ENCODE measurements at regions of chr20 and their contacts with region 1.

Region 1: DNA sequence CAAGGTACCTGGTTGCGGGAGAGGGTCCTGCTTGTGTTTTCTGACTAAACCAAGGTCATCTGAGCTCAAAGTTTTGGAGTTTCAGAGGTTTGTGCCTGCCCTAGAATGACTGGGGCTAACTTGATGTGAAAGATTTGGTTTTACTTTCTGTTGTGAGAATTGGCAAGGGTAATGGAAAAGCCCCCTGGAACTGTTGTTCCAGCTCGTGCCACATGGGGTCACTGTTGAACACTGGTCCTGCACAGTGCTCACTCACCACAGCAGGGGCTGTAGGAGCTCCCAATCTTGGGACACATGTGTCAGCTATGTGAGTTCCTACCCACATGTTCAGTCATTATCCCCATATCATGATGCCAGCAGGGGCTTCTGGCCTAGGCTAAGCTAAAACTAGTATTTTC is 6.5 kb downstream of the TGM6 start:
- DNase-seq: peak; percentile 82
- ATAC-seq: peak; percentile 90
- H3K4me3 Mint-ChIP-seq: no peak overlapping the region
- H3K27ac Mint-ChIP-seq: no peak overlapping the region
- H3K4me1 Mint-ChIP-seq: peaks cover 3% of the 10 kb centered on the region
- H3K27me3 Mint-ChIP-seq: peaks cover 10% of the 10 kb centered on the region

Region 2: DNA sequence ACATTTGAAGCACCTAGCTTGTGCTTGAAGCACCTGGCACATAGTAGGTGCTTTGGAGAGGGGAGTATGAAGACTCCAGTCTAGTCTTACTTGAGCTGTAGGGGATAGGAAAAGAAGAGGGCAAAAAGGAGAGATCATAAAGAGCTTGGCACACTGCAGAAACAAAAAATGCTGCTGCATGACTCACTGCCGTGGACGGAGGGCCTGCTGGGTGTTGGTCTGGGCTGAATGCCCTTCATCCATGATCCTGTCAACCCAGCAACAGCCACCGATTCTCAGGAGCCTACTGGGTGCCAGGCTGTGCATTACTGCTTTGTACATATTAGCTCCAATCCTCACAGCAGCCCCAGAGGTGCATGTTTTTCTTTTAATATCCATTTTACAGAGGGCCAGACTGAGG is 399.4 kb before region 1 on chr20:
- CTCF ChIA-PET with region 1: no interaction called
- POLR2A ChIA-PET with region 1: no interaction called
- intact Hi-C with region 1: no loop called
- DNase-seq: no peak
- ATAC-seq: no peak
- H3K4me3 Mint-ChIP-seq: no peak overlapping the region
- H3K27ac Mint-ChIP-seq: no peak overlapping the region
- H3K4me1 Mint-ChIP-seq: no peaks in the 10 kb centered on the region
- H3K27me3 Mint-ChIP-seq: peaks cover 27% of the 10 kb centered on the region

Region 3: DNA sequence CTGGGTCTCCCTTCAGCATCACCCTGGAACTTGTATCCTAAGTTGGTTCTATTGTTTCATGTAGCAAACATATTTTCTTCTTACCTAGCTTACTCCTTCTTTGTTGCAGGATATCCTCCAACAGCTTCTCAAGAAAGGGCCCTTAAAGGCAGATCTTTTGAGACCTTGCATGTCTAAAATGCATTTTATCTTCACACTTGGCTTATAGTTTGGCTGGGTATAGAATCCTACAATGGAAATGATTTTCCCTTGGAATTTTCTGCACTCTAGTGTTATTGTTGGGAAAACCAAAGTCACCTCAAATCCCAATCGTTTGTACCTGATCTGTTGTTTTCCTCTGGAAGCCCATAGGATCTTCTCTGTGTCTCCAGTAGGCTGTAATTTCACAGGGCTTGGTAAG is 18.6 kb before region 1 on chr20:
- CTCF ChIA-PET with region 1: interaction called, 13 read pairs
- POLR2A ChIA-PET with region 1: no interaction called
- intact Hi-C with region 1: no loop called
- DNase-seq: no peak
- ATAC-seq: no peak
- H3K4me3 Mint-ChIP-seq: no peak overlapping the region
- H3K27ac Mint-ChIP-seq: no peak overlapping the region
- H3K4me1 Mint-ChIP-seq: no peaks in the 10 kb centered on the region
- H3K27me3 Mint-ChIP-seq: peaks cover 42% of the 10 kb centered on the region

Region 4: DNA sequence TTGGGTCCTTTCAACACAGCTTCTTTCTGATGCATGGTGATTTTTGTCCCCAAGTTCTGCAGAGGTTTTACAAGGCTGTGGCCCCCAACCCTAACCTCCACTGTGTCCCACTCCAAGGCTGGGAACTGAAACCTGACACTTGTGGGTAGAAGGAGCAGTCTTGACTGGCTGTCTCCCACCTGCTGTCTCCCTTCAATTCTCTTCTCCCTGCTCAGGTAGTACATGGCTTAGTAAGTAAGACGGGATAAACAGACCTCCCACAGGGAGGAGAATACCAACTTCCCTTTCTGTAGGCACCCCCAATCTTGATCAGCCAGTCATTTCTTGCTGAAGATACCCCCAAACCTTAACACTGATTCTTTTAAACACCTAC is 18.5 kb after region 1 on chr20:
- CTCF ChIA-PET with region 1: interaction called, 10 read pairs
- POLR2A ChIA-PET with region 1: interaction called, 5 read pairs
- intact Hi-C with region 1: no loop called
- DNase-seq: no peak
- ATAC-seq: no peak
- H3K4me3 Mint-ChIP-seq: no peak overlapping the region
- H3K27ac Mint-ChIP-seq: no peak overlapping the region
- H3K4me1 Mint-ChIP-seq: no peaks in the 10 kb centered on the region
- H3K27me3 Mint-ChIP-seq: peaks cover 11% of the 10 kb centered on the region